Dorsolateral prefrontal cortex (tissue), 120 donors: ENCODE measurements at regions of chr6 and their contacts with region 1.

Region 1: GRCh38 chr6:56757588-56757984 is 114.9 kb upstream of the DST start:
- DNase-seq: peak in 3 of 10 donors; percentile 49 to 56 (median 55)
- H3K4me3 ChIP-seq: peak overlapping the region in 16 of 59 donors; percentile 0 to 32 (median 9)
- H3K27ac ChIP-seq: peak overlapping the region; percentile 13 to 91 (median 86)
- H3K27me3 ChIP-seq: no peaks in the 10 kb centered on the region
- CTCF ChIP-seq: peak in 54 of 56 donors; percentile 28 to 75 (median 54)

Region 2: DNA sequence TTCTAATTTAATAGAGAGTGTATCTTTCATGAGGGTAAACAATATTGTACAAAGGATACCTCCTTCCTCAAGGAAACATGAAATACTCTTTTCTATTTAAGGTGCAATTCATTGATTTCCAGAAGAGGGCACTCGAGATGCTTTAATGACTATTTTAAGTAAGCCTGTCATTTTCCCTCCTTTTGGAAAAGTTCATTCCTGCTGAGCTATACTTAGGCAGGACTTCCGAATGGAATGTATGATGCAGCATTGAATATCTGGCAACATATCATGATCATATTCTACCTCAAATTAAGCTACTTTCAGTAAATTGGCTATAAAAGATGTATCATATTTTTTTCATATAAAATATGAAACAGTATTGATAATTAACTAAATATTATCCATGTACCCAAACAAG is 119.9 kb before region 1 on chr6:
- intact Hi-C with region 1: loop called (anchors 5 kb)
- DNase-seq: no peak
- H3K4me3 ChIP-seq: no peak overlapping the region
- H3K27ac ChIP-seq: peak overlapping the region in 46 of 59 donors; percentile 2 to 83 (median 58)
- H3K27me3 ChIP-seq: no peaks in the 10 kb centered on the region
- CTCF ChIP-seq: peak; percentile 59 to 94 (median 79)

Region 3: DNA sequence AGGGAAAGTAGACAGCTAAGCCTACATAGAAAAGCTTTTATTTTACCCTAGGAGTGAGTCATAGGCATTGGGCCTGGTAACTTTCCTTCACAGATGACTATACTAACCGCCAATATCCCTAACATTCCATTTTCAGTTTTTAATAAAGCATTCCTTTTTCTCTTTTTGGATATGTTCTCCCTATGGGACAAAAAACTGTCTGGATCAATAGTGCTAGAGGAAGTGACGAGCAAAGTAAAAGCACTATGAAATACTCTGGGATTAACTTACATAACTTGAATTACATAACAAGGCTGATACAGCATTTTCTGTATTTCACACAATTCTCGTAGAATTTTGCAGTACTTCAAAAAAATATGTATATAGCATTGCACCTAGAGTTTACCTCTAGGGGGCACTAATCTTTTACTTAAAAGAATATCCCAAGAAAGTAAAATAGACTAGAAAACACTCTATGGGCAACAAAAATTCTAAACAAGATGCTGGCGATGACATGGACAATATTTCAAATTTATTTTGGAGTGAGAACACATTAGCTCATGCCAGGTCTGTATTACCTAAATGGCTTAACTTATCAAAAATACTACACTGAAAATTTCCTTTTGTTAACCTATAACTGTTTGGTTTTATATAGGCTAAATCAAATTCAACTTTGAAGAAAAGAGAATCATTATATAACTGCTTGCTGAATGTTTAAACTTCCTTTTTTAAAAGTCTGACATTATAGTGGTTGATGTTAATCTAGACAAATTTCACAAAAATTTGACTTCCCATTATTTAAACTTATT is 48.6 kb before region 1 on chr6:
- intact Hi-C with region 1: loop called (anchors 2 to 5 kb)
- DNase-seq: no peak
- H3K4me3 ChIP-seq: peak overlapping the region in 8 of 59 donors; percentile 0 to 20 (median 11)
- H3K27ac ChIP-seq: peak overlapping the region; percentile 40 to 95 (median 88)
- H3K27me3 ChIP-seq: no peaks in the 10 kb centered on the region
- CTCF ChIP-seq: peak; percentile 46 to 88 (median 73)